ENCODE measurements at regions of chrX and their contacts with region 1.

Region 1: GRCh38 chrX:97057349-97058026 is 173.8 kb downstream of the RPA4 start:
- DNase-seq: no peak
- ATAC-seq: no peak
- H3K4me3 ChIP-seq: no peak overlapping the region
- H3K27ac ChIP-seq: no peak overlapping the region
- H3K4me1 ChIP-seq: no peaks in the 10 kb centered on the region
- H3K27me3 ChIP-seq: peaks cover 0 to 4% (median 0%) of the 10 kb centered on the region in 7 donors
- CTCF ChIP-seq: no peak

Region 2: DNA sequence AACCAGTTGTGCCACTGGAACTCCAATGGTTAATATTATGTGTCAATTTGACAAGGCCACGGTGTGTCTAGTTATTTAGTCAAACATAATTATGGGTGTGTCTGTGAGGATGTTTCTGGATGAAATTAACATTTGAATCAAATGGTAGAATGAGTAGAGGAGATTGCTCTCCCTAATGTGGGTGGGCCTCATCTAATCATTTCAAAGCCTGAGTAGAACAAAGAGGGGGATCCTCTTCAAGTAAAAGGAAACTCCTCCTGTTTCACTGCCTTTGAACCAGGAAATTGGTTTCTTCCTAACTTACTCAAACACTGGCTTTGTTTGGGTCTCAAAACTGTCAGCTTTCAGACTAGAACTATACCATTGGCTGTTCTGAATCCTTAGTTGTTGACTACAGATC is 1660.5 kb after region 1 on chrX:
- intact Hi-C with region 1: loop called in 1 of 10 experiments (anchors 10 kb)
- DNase-seq: no peak
- ATAC-seq: no peak
- H3K4me3 ChIP-seq: no peak overlapping the region
- H3K27ac ChIP-seq: no peak overlapping the region
- H3K4me1 ChIP-seq: no peaks in the 10 kb centered on the region
- H3K27me3 ChIP-seq: no peaks in the 10 kb centered on the region
- CTCF ChIP-seq: no peak